Mucosa of descending colon (tissue), 3 donors: ENCODE measurements at regions of chr15 and their contacts with region 1.

Region 1: GRCh38 chr15:75029378-75030022 is 6.1 kb downstream of the PPCDC start:
- DNase-seq: peak; percentile 93 to 99 (median 95)
- ATAC-seq: peak; percentile 91
- H3K4me3 ChIP-seq: no peak overlapping the region
- H3K4me1 ChIP-seq: peaks cover 23% of the 10 kb centered on the region
- CTCF ChIP-seq: peak; percentile 92

Region 2: GRCh38 chr15:74978503-74978902 is 51.0 kb before region 1 on chr15:
- intact Hi-C with region 1: no loop called
- DNase-seq: peak in 1 of 3 donors; percentile 14
- ATAC-seq: no peak
- H3K4me3 ChIP-seq: no peak overlapping the region
- H3K4me1 ChIP-seq: peaks cover 4% of the 10 kb centered on the region
- CTCF ChIP-seq: no peak

Region 3: GRCh38 chr15:75153087-75153486 is 123.6 kb after region 1 on chr15:
- intact Hi-C with region 1: no loop called
- DNase-seq: peak in 1 of 3 donors; percentile 22
- ATAC-seq: no peak
- H3K4me3 ChIP-seq: no peak overlapping the region
- H3K4me1 ChIP-seq: no peaks in the 10 kb centered on the region
- CTCF ChIP-seq: no peak

Region 4: GRCh38 chr15:75201609-75202250 is 172.2 kb after region 1 on chr15 and contains the start of gene C15orf39:
- intact Hi-C with region 1: loop called (anchors 5 kb)
- DNase-seq: peak; percentile 78 to 87 (median 86)
- ATAC-seq: peak; percentile 76
- H3K4me3 ChIP-seq: peak within 1 kb of the TSS; percentile 93
- H3K4me1 ChIP-seq: peaks cover 41% of the 10 kb centered on the region
- CTCF ChIP-seq: peak; percentile 92
- total RNA-seq, gene C15orf39: 22.2 to 32.5 (median 24.2) TPM